Right cardiac atrium (tissue), 5 donors: ENCODE measurements at regions of chr7 and their contacts with region 1.

Region 1: GRCh38 chr7:123635551-123636359 is 19.9 kb upstream of the LMOD2 start:
- DNase-seq: no peak
- ATAC-seq: peak; percentile 46 to 70
- H3K4me3 ChIP-seq: no peak overlapping the region
- H3K27ac ChIP-seq: no peak overlapping the region
- H3K4me1 ChIP-seq: peaks cover 3% of the 10 kb centered on the region
- H3K27me3 ChIP-seq: no peaks in the 10 kb centered on the region

Region 2: DNA sequence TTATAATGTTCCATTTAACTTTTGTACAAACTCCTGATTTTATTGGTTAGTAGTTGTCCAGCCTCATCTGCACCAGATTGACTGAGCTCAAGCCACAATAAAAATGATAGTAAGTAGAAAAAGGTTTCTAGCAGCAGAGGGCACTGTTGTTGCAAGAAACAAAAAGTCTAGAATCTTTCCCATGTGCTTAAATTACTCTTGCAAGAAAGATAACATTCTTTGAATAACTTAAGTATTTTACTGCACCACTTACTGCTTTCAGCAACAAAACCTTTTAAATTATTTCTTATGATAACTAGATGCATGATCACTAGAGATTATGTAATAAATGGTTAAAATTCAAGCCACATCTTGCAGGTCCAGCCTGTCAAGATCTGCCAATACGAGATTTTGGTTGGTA is 46.9 kb after region 1 on chr7:
- intact Hi-C with region 1: loop called in 2 of 4 experiments (anchors 10 kb)
- DNase-seq: no peak
- ATAC-seq: peak; percentile 39 to 43
- H3K4me3 ChIP-seq: no peak overlapping the region
- H3K27ac ChIP-seq: no peak overlapping the region
- H3K4me1 ChIP-seq: peaks cover 2% of the 10 kb centered on the region
- H3K27me3 ChIP-seq: no peaks in the 10 kb centered on the region